ENCODE measurements at regions of chr20 and their contacts with region 1.

Region 1: GRCh38 chr20:815914-816606 is 17.5 kb upstream of the FAM110A start:
- DNase-seq: peak; percentile 56
- ATAC-seq: peak; percentile 65
- H3K4me3 ChIP-seq: no peak overlapping the region
- H3K27ac ChIP-seq: no peak overlapping the region
- H3K4me1 ChIP-seq: peaks cover 8 to 16% of the 10 kb centered on the region in 2 experiments
- H3K27me3 ChIP-seq: no peaks in the 10 kb centered on the region
- CTCF ChIP-seq: peak; percentile 93 to 98 (median 95)
- POLR2A ChIP-seq: no peak
- RAD21 ChIP-seq: peak; percentile 97

Region 2: DNA sequence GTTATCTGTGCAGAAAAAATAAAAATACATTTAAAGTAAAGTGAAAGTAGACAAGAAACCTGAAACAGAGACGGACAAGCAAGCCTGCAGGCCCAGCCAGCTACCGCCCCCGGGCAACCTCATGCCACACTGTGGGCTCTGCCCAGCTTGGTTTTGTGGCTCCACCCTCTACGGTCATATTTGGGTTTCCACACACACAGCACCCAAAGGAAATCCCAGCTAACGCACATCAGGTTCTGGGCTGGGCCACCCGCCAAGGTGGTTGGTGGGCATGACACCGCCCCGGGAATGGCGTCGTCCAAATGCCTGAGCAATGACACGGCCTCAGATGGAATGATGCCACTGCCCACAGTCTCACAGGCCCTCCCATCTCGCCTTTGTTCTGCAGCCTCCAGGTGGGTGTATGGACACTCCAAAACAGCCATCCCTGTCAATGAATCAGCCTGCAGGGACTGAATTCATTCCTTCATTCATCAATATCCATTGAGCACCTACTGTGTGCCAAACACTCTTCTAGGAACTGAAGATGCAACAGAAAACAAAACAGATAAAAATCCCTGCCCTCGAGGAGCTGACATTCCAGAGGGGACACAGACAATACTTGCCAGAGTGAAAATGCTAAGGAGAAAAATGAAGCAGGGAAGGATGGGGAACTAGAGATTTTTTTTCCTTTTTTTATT is 40.4 kb after region 1 on chr20:
- CTCF ChIA-PET with region 1: interaction called, 6 read pairs
- POLR2A ChIA-PET with region 1: no interaction called
- RAD21 ChIA-PET with region 1: interaction called, 4 to 5 read pairs
- intact Hi-C with region 1: loop called (anchors 1 kb)
- DNase-seq: peak; percentile 92
- ATAC-seq: peak; percentile 96
- H3K4me3 ChIP-seq: peak overlapping the region in 1 of 2 experiments; percentile 18; a peak in 1 of 4 replicates
- H3K27ac ChIP-seq: peak overlapping the region; percentile 1
- H3K4me1 ChIP-seq: peaks cover 24 to 61% of the 10 kb centered on the region in 2 experiments
- H3K27me3 ChIP-seq: no peaks in the 10 kb centered on the region
- CTCF ChIP-seq: no peak
- POLR2A ChIP-seq: no peak
- RAD21 ChIP-seq: 0 out of 2 replicates have a peak, but pooled peaks have one; percentile 9

Region 3: GRCh38 chr20:956330-956951 is 140.4 kb after region 1 on chr20:
- CTCF ChIA-PET with region 1: interaction called, 181 read pairs
- POLR2A ChIA-PET with region 1: interaction called, 9 read pairs
- RAD21 ChIA-PET with region 1: interaction called, 10 to 20 read pairs
- intact Hi-C with region 1: loop called (anchors 1 kb)
- DNase-seq: peak; percentile 48
- ATAC-seq: peak; percentile 85
- H3K4me3 ChIP-seq: no peak overlapping the region
- H3K27ac ChIP-seq: no peak overlapping the region
- H3K4me1 ChIP-seq: peaks cover 4 to 13% of the 10 kb centered on the region in 2 experiments; a peak in 3 of 4 replicates
- H3K27me3 ChIP-seq: no peaks in the 10 kb centered on the region
- CTCF ChIP-seq: peak; percentile 96 to 99 (median 96)
- POLR2A ChIP-seq: no peak
- RAD21 ChIP-seq: peak; percentile 100

Region 4: GRCh38 chr20:1185790-1186334 is 369.8 kb after region 1 on chr20:
- CTCF ChIA-PET with region 1: no interaction called
- POLR2A ChIA-PET with region 1: no interaction called
- RAD21 ChIA-PET with region 1: no interaction called
- intact Hi-C with region 1: loop called (anchors 10 kb)
- DNase-seq: peak; percentile 34
- ATAC-seq: peak; percentile 81
- H3K4me3 ChIP-seq: peak overlapping the region; percentile 51 to 59
- H3K27ac ChIP-seq: no peak overlapping the region; the same call in 1 of the 2 replicates
- H3K4me1 ChIP-seq: peaks cover 14 to 32% of the 10 kb centered on the region in 2 experiments; a peak in 3 of 4 replicates
- H3K27me3 ChIP-seq: peaks cover 7% of the 10 kb centered on the region; the same call in 1 of the 2 replicates
- CTCF ChIP-seq: peak; percentile 43 to 77 (median 69); a peak in 5 of 6 replicates
- POLR2A ChIP-seq: no peak
- RAD21 ChIP-seq: peak; percentile 58